ENCODE measurements at regions of chr11 and their contacts with region 1.

Region 1: DNA sequence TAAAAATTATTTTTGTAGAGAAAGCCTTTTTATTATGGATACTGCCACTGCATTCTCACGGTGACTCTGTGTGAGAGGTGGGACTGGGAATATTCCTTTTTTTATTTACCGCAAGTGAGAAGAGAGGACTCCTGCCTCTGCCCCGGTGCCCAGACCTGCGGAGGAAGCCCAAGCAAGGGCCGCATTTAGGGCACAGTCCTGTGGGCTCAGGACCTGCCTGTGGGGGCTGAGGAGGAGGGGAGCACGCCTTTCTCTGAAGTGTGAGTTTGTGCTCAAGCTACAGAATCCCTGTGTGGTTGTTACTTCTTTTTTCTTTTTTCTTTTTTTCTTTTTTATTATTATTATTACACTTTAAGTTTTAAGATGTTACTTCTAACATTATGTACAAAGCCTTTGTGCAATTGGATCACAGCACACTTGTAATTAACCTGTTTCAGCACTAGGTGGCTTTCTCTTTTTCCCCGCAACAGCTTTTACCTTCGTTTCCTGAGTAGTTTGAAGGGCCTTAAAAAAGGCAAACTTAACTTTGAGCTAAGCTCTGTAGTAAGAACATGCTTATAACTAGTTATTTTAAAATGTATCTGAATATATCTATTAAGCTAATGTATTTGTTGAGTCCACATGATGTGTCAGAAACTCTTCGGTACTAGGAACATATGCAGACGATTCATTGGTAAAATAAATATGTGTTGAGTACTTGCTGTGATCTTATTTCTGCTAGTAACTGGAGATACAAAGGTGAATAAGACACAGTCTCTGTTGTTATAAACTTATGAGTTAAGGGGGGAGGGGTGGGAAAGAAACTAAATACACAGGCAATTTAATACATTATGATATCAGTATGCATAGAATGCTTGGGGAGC is 18.3 kb downstream of the AMOTL1 start:
- DNase-seq: no peak
- H3K4me3 ChIP-seq: no peak overlapping the region
- H3K27ac ChIP-seq: no peak overlapping the region
- H3K4me1 ChIP-seq: peaks cover 7% of the 10 kb centered on the region
- H3K27me3 ChIP-seq: no peaks in the 10 kb centered on the region
- CTCF ChIP-seq: peak in 3 of 4 experiments; percentile 42 to 59 (median 46)
- POLR2A ChIP-seq: no peak

Region 2: DNA sequence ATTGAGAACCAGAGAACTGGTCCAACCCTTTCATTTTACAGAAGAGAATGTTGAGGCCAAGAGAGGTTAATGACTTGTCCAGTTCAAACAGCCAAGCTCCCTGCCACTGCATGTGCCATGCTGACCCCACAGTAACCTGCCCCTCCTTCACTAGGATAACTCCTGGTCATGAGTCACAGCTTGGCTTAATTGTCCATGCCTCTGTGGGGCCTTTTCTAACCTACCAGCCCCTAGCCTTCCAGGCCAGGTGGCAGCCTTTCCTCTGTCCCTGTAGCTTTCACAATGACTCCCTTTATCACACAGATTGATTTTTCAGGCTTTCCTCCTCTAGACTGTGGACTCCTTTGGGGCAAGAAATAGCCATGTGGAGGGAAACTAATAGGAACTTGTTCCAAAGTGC is 122.1 kb before region 1 on chr11:
- intact Hi-C with region 1: no loop called
- DNase-seq: no peak
- H3K4me3 ChIP-seq: no peak overlapping the region
- H3K27ac ChIP-seq: no peak overlapping the region
- H3K4me1 ChIP-seq: no peaks in the 10 kb centered on the region
- H3K27me3 ChIP-seq: no peaks in the 10 kb centered on the region
- CTCF ChIP-seq: no peak
- POLR2A ChIP-seq: no peak

Region 3: DNA sequence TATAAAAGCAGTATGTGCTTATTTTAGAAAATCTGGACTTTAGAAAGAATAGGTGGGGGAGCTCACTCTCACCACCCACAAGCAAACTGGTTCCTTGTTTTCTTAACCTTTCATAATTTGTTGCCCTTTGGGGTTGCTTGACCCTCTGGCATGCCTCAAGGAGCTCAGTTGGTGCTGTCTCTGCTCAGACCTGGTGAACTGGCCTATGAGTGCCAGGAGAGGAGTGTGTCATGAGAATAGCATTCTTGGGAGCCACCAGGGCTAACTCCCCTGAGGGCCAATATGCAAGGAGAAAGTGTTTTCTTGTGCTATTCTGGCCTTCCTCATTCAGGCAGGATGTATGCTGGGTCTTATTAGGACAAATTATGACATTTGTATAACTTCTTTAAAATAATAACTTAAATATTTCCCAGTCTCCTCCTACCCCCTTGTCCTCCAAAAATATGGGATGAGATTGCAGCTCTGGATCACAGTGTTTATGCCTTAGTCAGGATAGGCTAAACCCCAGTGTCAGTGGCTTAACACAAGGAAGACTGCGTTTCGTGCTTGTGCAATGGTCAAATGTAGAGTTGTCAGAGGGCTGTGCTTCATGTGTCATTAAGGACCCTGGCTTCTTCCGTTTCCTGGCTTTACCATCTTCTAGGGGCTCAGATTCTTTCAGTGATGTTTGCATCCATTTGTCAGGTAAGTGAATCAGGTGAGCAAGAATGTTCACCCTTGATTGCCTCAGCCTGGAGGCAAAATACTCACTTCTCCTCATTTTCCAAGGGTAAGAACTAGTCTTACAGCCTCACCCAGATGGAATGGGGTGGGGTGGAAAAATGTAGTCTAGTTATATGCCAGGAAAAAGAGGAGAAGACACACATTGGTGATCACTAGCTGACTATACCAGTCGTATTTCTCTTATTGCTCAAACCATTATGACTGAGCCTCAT is 39.1 kb before region 1 on chr11:
- intact Hi-C with region 1: no loop called
- DNase-seq: no peak
- H3K4me3 ChIP-seq: no peak overlapping the region
- H3K27ac ChIP-seq: peak overlapping the region; percentile 27 to 36
- H3K4me1 ChIP-seq: no peaks in the 10 kb centered on the region
- H3K27me3 ChIP-seq: no peaks in the 10 kb centered on the region
- CTCF ChIP-seq: no peak
- POLR2A ChIP-seq: no peak

Region 4: DNA sequence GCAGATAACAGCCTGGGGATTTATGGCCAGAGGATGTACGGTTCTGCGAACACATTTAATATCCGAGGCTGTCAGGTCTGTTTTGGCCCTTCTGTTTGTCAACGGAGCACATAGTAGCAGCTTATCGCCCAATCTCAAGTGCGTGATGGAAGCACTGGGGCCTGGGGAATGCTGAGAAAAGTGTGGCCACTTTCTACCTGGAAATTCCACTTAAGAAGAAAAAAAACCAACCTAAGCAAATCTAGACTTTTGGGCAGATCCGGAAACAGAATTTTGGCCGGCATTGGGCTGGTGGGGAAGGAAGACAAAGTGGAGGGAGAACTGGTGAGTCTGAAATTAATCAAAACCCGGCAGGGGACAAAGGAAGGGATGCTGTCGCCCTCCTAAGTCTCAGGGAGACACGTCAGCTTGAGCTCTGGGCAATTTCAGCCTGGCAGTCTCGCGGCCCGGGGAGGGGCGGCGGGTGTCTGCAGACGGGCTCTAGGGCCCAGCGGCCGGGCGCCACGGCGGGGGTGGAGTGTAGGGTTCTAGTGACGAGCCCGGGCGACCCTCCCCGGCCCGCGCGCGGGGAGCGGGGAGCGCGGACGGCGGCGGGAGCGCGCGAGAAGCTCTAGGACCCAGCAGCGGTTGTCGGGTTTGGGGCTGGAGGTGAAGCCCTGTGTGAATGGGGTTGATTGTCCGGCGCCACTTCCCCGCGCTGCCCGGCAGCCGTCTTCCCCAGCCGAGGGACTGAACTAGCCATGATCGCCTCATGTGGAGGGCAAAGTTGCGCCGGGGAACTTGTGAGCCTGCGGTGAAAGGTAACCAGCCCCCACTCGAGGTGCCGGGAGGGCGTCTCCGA is 18.5 kb before region 1 on chr11 and contains the start of gene AMOTL1:
- intact Hi-C with region 1: no loop called
- DNase-seq: peak; percentile 89
- H3K4me3 ChIP-seq: peak within 1 kb of the TSS; percentile 62 to 80
- H3K27ac ChIP-seq: peak within 1 kb of the TSS; percentile 92 to 94
- H3K4me1 ChIP-seq: peaks cover 4% of the 10 kb centered on the region
- H3K27me3 ChIP-seq: no peaks in the 10 kb centered on the region
- CTCF ChIP-seq: no peak
- POLR2A ChIP-seq: peak; percentile 73
- total RNA-seq, gene AMOTL1: 49.2 to 67.2 TPM

Region 5: DNA sequence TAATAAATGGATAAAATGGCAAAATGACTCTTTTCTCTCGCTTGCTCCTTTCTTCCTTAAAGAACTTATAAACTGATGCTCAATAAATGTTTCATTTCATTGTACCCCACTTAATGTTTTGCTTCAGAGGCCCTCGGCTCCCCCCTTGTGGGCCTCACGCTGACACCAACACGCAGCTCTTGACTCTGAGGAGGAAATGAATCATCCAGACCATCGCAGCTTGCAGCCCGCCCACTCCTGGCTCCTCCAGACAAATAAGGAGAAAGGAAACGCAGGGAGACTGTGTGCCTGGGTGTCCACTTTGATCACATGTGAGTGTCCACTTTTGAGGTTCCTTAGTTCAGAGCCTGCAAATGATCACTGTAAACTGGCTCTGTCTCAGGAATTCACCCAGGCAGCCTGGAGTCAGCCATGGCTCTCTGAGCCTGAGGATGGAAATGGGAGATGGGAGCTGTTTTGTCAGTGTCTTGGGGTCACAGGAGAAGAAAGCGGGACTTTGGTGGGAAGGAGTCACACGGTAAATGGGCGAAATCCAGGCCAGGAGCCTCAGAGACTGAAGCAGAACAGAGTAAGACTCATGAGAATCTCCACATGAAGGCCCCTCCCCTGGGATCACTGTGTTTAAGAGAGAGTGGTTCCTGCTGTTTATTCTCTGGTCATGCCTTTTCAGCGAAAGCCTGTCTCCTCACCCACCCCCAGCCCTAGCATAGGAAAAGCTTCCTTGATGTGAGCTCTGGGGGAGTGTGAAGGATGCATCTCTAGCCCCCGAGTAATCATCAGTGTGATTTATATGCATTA is 90.3 kb after region 1 on chr11:
- intact Hi-C with region 1: loop called (anchors 5 kb)
- DNase-seq: peak; percentile 48
- H3K4me3 ChIP-seq: no peak overlapping the region
- H3K27ac ChIP-seq: peak overlapping the region; percentile 58 to 67
- H3K4me1 ChIP-seq: no peaks in the 10 kb centered on the region
- H3K27me3 ChIP-seq: no peaks in the 10 kb centered on the region
- CTCF ChIP-seq: peak in 1 of 4 experiments; percentile 32
- POLR2A ChIP-seq: no peak